ENCODE measurements at regions of chr14 and their contacts with region 1.

Region 1: GRCh38 chr14:76710056-76711010 is 50.9 kb upstream of the VASH1 start:
- DNase-seq: peak; percentile 10
- H3K4me3 ChIP-seq: no peak overlapping the region
- H3K27ac ChIP-seq: no peak overlapping the region
- H3K27me3 ChIP-seq: peaks cover 8% of the 10 kb centered on the region
- CTCF ChIP-seq: peak; percentile 86

Region 2: DNA sequence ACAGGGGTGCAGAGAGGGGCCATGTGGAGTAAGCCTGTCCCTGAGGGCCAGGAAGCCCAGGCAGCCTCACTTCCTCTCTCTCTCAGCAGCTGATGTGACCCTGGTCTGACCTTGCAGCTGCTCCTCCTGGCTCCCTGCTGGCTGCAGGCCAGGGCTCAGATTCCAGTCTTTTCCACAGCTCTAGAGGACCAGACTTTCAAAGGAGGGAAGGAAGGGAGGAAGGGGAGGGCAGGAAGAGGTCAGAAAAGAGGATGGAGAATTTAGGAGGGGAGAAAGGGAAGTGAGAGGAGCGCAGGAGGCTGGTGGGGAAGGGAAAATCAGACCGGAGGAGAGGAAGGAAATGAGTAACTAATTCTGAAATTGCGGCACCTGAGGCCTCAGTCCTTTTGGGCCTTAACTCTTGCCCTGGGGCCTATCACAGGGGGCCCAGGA is 10.1 kb after region 1 on chr14:
- CTCF ChIA-PET with region 1: interaction called, 30 read pairs
- POLR2A ChIA-PET with region 1: no interaction called
- DNase-seq: peak; percentile 10
- H3K4me3 ChIP-seq: no peak overlapping the region
- H3K27ac ChIP-seq: no peak overlapping the region
- H3K27me3 ChIP-seq: peaks cover 17% of the 10 kb centered on the region
- CTCF ChIP-seq: no peak

Region 3: DNA sequence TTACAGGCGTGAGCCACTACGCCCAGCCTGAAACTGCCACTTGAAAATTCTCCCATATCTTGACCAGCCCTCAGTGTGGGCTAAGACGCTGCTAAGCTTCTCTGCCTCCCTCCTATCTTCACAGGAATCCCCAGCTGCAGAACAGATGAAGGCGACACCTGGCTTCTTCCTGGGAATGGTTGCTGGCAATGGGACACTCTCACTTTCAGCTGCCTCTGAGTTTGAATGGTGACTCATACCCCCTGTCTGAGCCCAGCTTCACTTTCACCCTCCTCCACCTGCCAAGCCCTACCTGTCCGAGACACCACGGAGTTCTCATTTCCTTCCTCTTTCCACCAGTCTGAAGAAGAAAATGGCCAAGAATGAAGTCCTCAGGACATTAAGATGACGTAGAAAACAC is 32.6 kb after region 1 on chr14:
- CTCF ChIA-PET with region 1: interaction called, 14 read pairs
- POLR2A ChIA-PET with region 1: no interaction called
- DNase-seq: no peak
- H3K4me3 ChIP-seq: no peak overlapping the region
- H3K27ac ChIP-seq: no peak overlapping the region
- H3K27me3 ChIP-seq: peaks cover 2% of the 10 kb centered on the region
- CTCF ChIP-seq: no peak

Region 4: GRCh38 chr14:76784266-76785264 is 74.2 kb after region 1 on chr14:
- CTCF ChIA-PET with region 1: interaction called, 86 read pairs
- POLR2A ChIA-PET with region 1: interaction called, 4 read pairs
- DNase-seq: peak; percentile 34
- H3K4me3 ChIP-seq: no peak overlapping the region
- H3K27ac ChIP-seq: no peak overlapping the region
- H3K27me3 ChIP-seq: no peaks in the 10 kb centered on the region
- CTCF ChIP-seq: peak; percentile 85

Region 5: GRCh38 chr14:76812211-76813044 is 102.1 kb after region 1 on chr14 and contains the start of gene ANGEL1:
- CTCF ChIA-PET with region 1: interaction called, 51 read pairs
- POLR2A ChIA-PET with region 1: no interaction called
- DNase-seq: peak; percentile 72
- H3K4me3 ChIP-seq: peak within 1 kb of the TSS; percentile 73
- H3K27ac ChIP-seq: no peak within 1 kb of the TSS
- H3K27me3 ChIP-seq: peaks cover 9% of the 10 kb centered on the region
- CTCF ChIP-seq: no peak
- polyA plus RNA-seq, gene ANGEL1: 12.8 and 13.1 TPM in 2 replicates

Measured in AG04450 (cell line).